CD4-positive, alpha-beta T cell (primary cell): ENCODE measurements at regions of chr19 and their contacts with region 1.

Region 1: DNA sequence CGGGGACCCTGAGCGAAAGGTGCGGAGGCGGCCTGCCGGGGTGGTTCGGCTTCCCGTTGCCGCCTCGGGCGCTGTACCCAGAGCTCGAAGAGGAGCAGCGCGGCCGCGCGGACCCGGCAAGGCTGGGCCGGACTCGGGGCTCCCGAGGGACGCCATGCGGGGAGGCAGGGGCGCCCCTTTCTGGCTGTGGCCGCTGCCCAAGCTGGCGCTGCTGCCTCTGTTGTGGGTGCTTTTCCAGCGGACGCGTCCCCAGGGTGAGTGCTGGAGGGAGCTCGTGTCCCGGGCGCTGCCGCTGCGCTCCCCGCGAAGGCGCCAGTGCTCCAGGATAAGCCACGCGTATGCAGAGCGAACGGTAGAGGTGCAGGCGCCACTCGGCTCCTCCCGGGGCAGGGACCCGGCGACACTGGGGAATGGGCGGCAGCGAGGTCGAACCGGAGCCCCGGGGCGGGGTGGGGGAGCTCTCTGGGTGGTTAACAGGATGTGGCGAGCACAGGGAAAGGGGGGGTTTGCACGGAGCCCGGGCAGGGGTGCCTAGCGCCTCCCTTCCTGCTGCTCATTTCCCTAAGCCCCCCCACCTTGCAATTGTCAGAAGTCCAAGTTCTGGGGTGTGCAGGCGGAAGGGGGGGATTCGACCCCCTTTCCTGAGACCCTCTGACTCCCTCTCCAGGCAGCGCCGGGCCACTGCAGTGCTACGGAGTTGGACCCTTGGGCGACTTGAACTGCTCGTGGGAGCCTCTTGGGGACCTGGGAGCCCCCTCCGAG is at the start of gene IL27RA:
- DNase-seq: peak; percentile 67 to 94 (median 83)
- ATAC-seq: peak; percentile 82
- H3K4me3 ChIP-seq: peak within 1 kb of the TSS; percentile 86
- H3K4me3 Mint-ChIP-seq: peak within 1 kb of the TSS; percentile 98
- H3K27ac ChIP-seq: peak within 1 kb of the TSS; percentile 93 to 98
- H3K27ac Mint-ChIP-seq: peak within 1 kb of the TSS; percentile 94
- H3K4me1 ChIP-seq: peaks cover 49% of the 10 kb centered on the region
- H3K4me1 Mint-ChIP-seq: peaks cover 36% of the 10 kb centered on the region
- H3K27me3 ChIP-seq: no peaks in the 10 kb centered on the region
- H3K27me3 Mint-ChIP-seq: no peaks in the 10 kb centered on the region
- CTCF ChIP-seq: no peak
- total RNA-seq, gene IL27RA: 25.0 to 26.7 TPM

Region 2: DNA sequence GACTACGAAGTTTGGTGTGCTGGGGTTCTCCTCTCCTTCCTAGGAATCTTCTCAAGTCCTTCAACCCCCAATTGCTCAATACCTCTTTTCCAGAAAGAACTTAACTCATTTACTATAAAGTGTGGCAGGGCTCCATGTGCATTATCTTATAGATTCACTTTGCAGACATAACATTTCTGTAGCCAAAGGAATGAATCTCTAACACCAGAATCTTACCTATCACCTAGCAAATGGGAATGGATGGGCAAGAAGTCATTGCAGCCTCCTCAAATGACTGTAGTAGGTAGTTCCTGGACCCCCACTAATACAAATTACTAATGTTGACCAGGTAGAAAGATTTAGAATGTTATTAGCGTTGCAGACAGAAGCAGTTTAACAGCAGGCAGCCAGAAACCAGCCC is 520.0 kb before region 1 on chr19:
- CTCF ChIA-PET with region 1: no interaction called
- POLR2A ChIA-PET with region 1: no interaction called
- intact Hi-C with region 1: no loop called
- DNase-seq: no peak
- ATAC-seq: no peak
- H3K4me3 ChIP-seq: no peak overlapping the region
- H3K4me3 Mint-ChIP-seq: no peak overlapping the region
- H3K27ac ChIP-seq: no peak overlapping the region
- H3K27ac Mint-ChIP-seq: no peak overlapping the region
- H3K4me1 ChIP-seq: no peaks in the 10 kb centered on the region
- H3K4me1 Mint-ChIP-seq: no peaks in the 10 kb centered on the region
- H3K27me3 ChIP-seq: peaks cover 24 to 45% of the 10 kb centered on the region in 2 experiments
- H3K27me3 Mint-ChIP-seq: peaks cover 74% of the 10 kb centered on the region
- CTCF ChIP-seq: no peak

Region 3: GRCh38 chr19:13978347-13978733 is 53.6 kb before region 1 on chr19:
- CTCF ChIA-PET with region 1: interaction called, 3 read pairs
- POLR2A ChIA-PET with region 1: interaction called, 33 read pairs
- intact Hi-C with region 1: no loop called
- DNase-seq: peak in 2 of 14 experiments; percentile 36 to 42
- ATAC-seq: no peak
- H3K4me3 ChIP-seq: no peak overlapping the region
- H3K4me3 Mint-ChIP-seq: peak overlapping the region; percentile 54
- H3K27ac ChIP-seq: peak overlapping the region in 1 of 2 donors; percentile 23
- H3K27ac Mint-ChIP-seq: peak overlapping the region; percentile 63
- H3K4me1 ChIP-seq: peaks cover 58% of the 10 kb centered on the region
- H3K4me1 Mint-ChIP-seq: peaks cover 39% of the 10 kb centered on the region
- H3K27me3 ChIP-seq: no peaks in the 10 kb centered on the region
- H3K27me3 Mint-ChIP-seq: no peaks in the 10 kb centered on the region
- CTCF ChIP-seq: no peak

Region 4: DNA sequence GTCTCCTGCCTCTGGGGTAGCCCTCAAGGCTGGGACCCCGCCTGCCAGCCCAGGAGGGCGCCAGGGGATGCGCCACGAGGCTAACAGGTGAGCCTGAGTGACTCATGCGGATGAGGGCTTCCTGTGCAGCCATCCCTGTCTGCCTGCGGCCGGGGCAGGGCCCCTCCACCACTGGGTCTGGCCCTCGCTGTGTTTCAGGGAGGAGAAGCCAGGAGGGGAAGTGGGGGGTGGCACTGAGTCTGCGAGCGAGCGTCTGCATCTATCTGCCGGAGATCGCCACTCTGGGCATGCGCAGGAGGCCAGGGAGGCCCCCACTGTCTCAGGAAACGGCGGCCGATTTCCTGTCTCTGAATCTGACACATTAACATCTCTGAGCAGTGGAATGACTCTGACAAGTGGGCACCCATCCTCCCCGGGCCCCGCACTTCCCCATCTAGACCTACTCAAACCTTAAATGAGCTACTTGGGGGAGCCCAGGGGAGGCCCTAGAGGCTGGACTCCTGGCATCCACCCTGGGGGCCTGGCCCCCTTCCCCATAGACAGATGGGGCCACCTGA is 45.5 kb before region 1 on chr19:
- CTCF ChIA-PET with region 1: interaction called, 4 read pairs
- POLR2A ChIA-PET with region 1: interaction called, 33 read pairs
- intact Hi-C with region 1: loop called in 1 of 2 experiments (anchors 5 kb)
- DNase-seq: peak; percentile 95 to 100 (median 99)
- ATAC-seq: peak; percentile 87
- H3K4me3 ChIP-seq: peak overlapping the region; percentile 45
- H3K4me3 Mint-ChIP-seq: peak overlapping the region; percentile 83
- H3K27ac ChIP-seq: peak overlapping the region; percentile 97 to 99
- H3K27ac Mint-ChIP-seq: peak overlapping the region; percentile 97
- H3K4me1 ChIP-seq: peaks cover 93% of the 10 kb centered on the region
- H3K4me1 Mint-ChIP-seq: peaks cover 88% of the 10 kb centered on the region
- H3K27me3 ChIP-seq: no peaks in the 10 kb centered on the region
- H3K27me3 Mint-ChIP-seq: no peaks in the 10 kb centered on the region
- CTCF ChIP-seq: no peak

Region 5: GRCh38 chr19:14000686-14001623 is 30.9 kb before region 1 on chr19:
- CTCF ChIA-PET with region 1: interaction called, 3 read pairs
- POLR2A ChIA-PET with region 1: interaction called, 117 read pairs
- intact Hi-C with region 1: loop called in 1 of 2 experiments (anchors 1 kb)
- DNase-seq: no peak
- ATAC-seq: no peak
- H3K4me3 ChIP-seq: no peak overlapping the region
- H3K4me3 Mint-ChIP-seq: peak overlapping the region; percentile 70
- H3K27ac ChIP-seq: peak overlapping the region; percentile 67 to 93
- H3K27ac Mint-ChIP-seq: peak overlapping the region; percentile 91
- H3K4me1 ChIP-seq: peaks cover 80% of the 10 kb centered on the region
- H3K4me1 Mint-ChIP-seq: peaks cover 63% of the 10 kb centered on the region
- H3K27me3 ChIP-seq: no peaks in the 10 kb centered on the region
- H3K27me3 Mint-ChIP-seq: no peaks in the 10 kb centered on the region
- CTCF ChIP-seq: no peak